ENCODE measurements at regions of chr12 and their contacts with region 1.

Region 1: GRCh38 chr12:1795785-1796514 is 24.4 kb upstream of the LRTM2 start:
- DNase-seq: peak; percentile 96
- ATAC-seq: peak; percentile 91
- H3K4me3 Mint-ChIP-seq: peak overlapping the region; percentile 90
- H3K27ac Mint-ChIP-seq: peak overlapping the region; percentile 84
- H3K4me1 Mint-ChIP-seq: peaks cover 31% of the 10 kb centered on the region
- H3K27me3 Mint-ChIP-seq: no peaks in the 10 kb centered on the region
- CTCF ChIP-seq: peak; percentile 79

Region 2: DNA sequence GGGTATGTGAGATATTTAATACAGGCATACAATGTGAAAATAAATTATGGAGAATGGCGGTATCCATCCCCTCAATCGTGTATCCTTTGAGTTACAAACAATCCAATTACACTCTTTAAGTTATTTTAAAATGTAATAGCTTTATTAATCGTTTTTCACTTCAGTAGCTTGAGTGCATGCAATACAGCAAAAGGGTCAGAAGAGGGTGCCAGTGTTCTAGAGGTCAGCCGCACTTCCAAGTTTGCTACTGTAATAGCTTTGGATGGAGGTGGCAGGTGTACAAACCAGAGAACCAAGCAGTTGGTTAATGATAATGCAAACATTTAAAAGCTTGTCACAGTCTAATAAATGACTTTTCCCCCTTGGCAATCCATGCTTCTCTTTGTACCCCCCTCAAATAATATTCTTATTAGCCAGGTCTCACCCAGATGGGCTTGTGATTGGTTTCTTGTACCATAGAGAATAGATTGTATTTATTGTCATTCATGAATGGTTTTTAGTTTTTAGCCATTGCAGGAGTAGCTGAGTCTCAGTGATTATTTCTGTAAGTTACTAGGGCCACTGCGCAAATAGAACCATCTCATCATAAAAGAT is 677.9 kb before region 1 on chr12:
- CTCF ChIA-PET with region 1: interaction called, 15 read pairs
- POLR2A ChIA-PET with region 1: no interaction called
- intact Hi-C with region 1: loop called (anchors 1 kb)
- DNase-seq: peak; percentile 40
- ATAC-seq: peak; percentile 81
- H3K4me3 Mint-ChIP-seq: no peak overlapping the region
- H3K27ac Mint-ChIP-seq: no peak overlapping the region
- H3K4me1 Mint-ChIP-seq: peaks cover 2% of the 10 kb centered on the region
- H3K27me3 Mint-ChIP-seq: no peaks in the 10 kb centered on the region
- CTCF ChIP-seq: peak; percentile 42

Region 3: GRCh38 chr12:1650260-1650977 is 145.5 kb before region 1 on chr12:
- CTCF ChIA-PET with region 1: interaction called, 257 read pairs
- POLR2A ChIA-PET with region 1: interaction called, 15 read pairs
- intact Hi-C with region 1: loop called (anchors 1 kb)
- DNase-seq: no peak
- ATAC-seq: no peak
- H3K4me3 Mint-ChIP-seq: no peak overlapping the region
- H3K27ac Mint-ChIP-seq: no peak overlapping the region
- H3K4me1 Mint-ChIP-seq: peaks cover 18% of the 10 kb centered on the region
- H3K27me3 Mint-ChIP-seq: peaks cover 16% of the 10 kb centered on the region
- CTCF ChIP-seq: no peak

Region 4: DNA sequence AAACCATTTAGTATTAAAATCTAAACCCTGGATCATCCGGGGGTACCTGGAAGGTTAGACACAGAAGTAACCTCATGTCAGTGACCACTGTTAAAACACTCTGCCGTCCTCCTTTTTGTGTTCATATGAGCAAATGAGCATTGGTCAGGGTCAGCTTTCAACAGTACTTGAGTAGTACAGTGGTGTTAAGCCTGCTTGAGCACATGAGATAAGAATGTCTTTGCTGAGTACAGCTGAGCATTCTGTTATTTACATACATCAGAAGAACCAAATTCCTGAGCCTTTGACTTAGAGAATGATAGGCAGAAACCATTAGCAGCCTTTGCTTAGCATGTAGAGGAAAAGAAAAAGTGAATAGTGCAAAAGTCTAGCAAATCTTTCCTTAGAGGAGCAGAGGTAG is 14.2 kb before region 1 on chr12:
- CTCF ChIA-PET with region 1: interaction called, 11 read pairs
- POLR2A ChIA-PET with region 1: no interaction called
- intact Hi-C with region 1: no loop called
- DNase-seq: no peak
- ATAC-seq: no peak
- H3K4me3 Mint-ChIP-seq: no peak overlapping the region
- H3K27ac Mint-ChIP-seq: no peak overlapping the region
- H3K4me1 Mint-ChIP-seq: no peaks in the 10 kb centered on the region
- H3K27me3 Mint-ChIP-seq: no peaks in the 10 kb centered on the region
- CTCF ChIP-seq: no peak

Region 5: DNA sequence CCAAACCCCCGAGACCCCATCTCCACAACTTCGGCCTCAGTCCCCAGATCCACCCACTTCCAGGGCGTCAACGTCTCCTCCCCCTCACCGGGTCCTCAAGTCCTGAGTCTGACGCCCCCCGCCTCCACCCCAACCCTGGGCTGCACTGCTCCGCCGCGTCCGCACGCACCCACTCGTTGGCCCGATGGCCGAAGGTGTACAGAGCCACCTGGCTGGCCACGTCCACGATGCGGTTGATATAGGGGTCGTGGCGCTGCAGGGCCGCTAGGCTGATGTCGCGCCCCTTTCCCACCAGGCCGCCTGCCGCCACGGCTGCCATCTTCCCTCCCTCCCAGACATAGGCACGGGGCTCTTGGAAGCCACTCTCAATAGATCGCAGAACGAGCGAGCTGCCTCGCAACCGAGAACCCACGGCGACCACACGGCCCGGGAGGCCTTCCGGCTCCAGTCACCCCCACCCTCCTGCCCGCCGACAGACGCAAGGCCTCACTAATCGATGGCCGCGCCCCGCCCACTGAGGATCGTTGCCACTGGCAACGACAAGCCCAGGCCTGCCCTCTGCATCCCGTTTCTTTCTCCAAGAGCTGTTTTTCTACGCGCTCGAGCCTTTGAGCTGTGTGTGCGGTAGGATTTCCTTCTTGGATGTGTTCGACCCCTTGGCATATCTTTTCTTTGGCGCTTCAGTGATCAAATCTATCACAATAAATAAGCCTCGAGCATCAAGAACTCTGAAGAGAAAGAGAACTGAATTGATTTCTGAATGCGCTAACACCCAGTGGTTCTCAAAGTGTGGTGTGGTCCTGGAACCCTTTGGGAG is 208.4 kb after region 1 on chr12 and contains the start of gene DCP1B:
- CTCF ChIA-PET with region 1: no interaction called
- POLR2A ChIA-PET with region 1: no interaction called
- intact Hi-C with region 1: loop called (anchors 1 kb)
- DNase-seq: peak; percentile 83
- ATAC-seq: peak; percentile 99
- H3K4me3 Mint-ChIP-seq: peak within 1 kb of the TSS; percentile 99
- H3K27ac Mint-ChIP-seq: peak within 1 kb of the TSS; percentile 98
- H3K4me1 Mint-ChIP-seq: peaks cover 26% of the 10 kb centered on the region
- H3K27me3 Mint-ChIP-seq: no peaks in the 10 kb centered on the region
- CTCF ChIP-seq: no peak
- total RNA-seq, gene DCP1B: 12.4 and 14.7 TPM in 2 replicates

Region 6: DNA sequence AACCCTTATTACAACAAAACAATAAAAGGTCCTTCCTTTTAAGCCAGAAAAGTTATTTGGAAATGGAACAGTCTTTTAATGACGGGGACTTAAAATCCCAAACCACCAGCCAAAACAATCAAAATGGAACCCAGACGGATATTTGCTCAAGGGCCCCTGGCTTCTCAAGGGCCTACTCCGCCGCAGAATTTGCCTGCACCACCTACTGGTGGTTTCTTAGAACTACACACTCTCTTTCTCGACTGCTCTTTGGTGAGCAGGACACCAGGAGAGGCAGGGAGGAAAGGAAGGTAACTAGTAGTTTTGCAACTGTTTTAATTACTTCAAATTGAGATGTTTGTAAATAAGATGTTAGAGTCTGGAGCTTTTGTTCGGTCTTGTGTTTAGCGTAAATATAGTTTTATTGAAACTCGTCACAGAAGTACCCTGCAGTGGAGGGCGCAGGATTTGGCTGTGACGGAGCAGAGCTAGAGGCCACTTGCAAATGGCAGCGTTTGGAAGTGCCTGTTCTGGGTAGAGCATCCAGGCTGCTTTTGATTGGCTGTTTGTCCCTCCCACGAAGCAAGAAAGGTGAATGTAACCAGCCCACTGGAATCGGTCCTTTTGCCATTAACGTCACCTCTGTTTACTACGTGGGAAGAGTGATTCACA is 495.4 kb after region 1 on chr12:
- CTCF ChIA-PET with region 1: interaction called, 3 read pairs
- POLR2A ChIA-PET with region 1: no interaction called
- intact Hi-C with region 1: loop called (anchors 1 kb)
- DNase-seq: no peak
- ATAC-seq: peak; percentile 64
- H3K4me3 Mint-ChIP-seq: no peak overlapping the region
- H3K27ac Mint-ChIP-seq: no peak overlapping the region
- H3K4me1 Mint-ChIP-seq: peaks cover 8% of the 10 kb centered on the region
- H3K27me3 Mint-ChIP-seq: peaks cover 11% of the 10 kb centered on the region
- CTCF ChIP-seq: peak; percentile 65

Measured in activated B cell treated with CpG ODN at 0.5 μM for 24 hours (primary cell).